Dendritic cell treated with granulocyte-macrophage colony-stimulating factor and Interleukin-4, amounts not matched to agents 40 ng/mL and 50 ng/mL, for 4 days (primary cell): ENCODE measurements at regions of chr11 and their contacts with region 1.

Region 1: GRCh38 chr11:73393479-73394380 is 17.5 kb downstream of the RELT start:
- H3K4me3 Mint-ChIP-seq: no peak overlapping the region
- H3K27ac Mint-ChIP-seq: peak overlapping the region; percentile 52
- H3K4me1 Mint-ChIP-seq: peaks cover 90% of the 10 kb centered on the region
- H3K27me3 Mint-ChIP-seq: no peaks in the 10 kb centered on the region

Region 2: GRCh38 chr11:73350908-73351636 is 42.7 kb before region 1 on chr11:
- intact Hi-C with region 1: loop called (anchors 1 kb)
- H3K4me3 Mint-ChIP-seq: no peak overlapping the region
- H3K27ac Mint-ChIP-seq: no peak overlapping the region
- H3K4me1 Mint-ChIP-seq: peaks cover 11% of the 10 kb centered on the region
- H3K27me3 Mint-ChIP-seq: peaks cover 3% of the 10 kb centered on the region

Region 3: GRCh38 chr11:73376160-73376802 is 17.4 kb before region 1 on chr11 and contains the start of gene RELT:
- intact Hi-C with region 1: loop called (anchors 1 kb)
- H3K4me3 Mint-ChIP-seq: peak within 1 kb of the TSS; percentile 84
- H3K27ac Mint-ChIP-seq: peak within 1 kb of the TSS; percentile 86
- H3K4me1 Mint-ChIP-seq: peaks cover 60% of the 10 kb centered on the region
- H3K27me3 Mint-ChIP-seq: peaks cover 5% of the 10 kb centered on the region